Transverse colon (tissue), 4 donors: ENCODE measurements at regions of chr19 and their contacts with region 1.

Region 1: DNA sequence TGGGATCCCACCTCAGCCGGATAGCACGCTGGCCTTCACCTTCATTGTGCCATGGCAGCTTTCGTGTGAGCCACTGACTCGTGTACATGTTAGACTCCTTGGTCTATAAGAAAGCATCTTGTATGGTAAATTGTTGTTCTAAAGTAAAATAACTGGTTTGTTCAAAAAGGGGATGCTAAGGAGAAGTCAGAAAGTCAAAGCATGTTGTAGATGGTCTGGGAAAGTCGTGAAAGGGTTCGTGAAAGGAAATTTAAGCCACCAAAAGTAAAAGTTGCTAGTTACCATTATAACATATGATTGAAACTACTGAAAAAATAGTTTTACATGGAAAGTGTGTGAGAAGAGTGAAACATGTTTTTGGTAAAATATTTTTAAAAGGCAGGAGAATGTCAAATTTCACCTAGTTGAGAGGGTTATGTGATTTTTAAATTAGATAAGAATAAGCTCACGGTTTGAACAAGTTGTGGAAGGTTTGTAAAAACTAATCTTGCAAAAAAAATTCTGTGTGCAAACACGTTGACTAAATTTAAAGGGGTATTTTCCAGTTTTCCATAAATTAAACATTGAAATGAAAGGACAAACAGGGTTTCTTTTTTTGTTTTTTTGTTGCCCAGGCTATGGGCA is 23.4 kb downstream of the DPRX start:
- DNase-seq: no peak
- H3K4me3 ChIP-seq: no peak overlapping the region
- H3K27ac ChIP-seq: no peak overlapping the region
- H3K4me1 ChIP-seq: no peaks in the 10 kb centered on the region
- H3K27me3 ChIP-seq: no peaks in the 10 kb centered on the region
- CTCF ChIP-seq: no peak
- EP300 ChIP-seq: no peak
- POLR2A ChIP-seq: no peak

Region 2: DNA sequence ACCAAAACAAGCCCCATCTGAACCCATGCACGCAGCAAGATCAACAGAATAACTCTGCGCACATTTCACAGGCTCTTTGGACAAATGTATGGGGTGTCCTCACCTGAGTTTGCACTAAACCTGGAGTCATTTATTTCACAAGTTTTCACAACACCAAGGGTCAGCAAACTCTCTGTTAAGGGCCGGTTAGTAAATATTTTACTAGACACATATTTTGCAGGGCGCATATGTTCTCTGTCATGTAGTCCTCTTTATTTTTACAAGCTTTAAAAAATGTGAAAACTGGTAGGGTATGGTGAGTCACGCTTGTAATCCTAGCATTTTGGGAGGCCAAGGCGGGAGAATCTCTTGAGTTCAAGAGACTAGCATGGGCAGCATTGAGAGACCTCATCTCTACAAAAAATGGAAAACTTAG is 68.9 kb before region 1 on chr19:
- in situ Hi-C with region 1: no loop called
- intact Hi-C with region 1: loop called (anchors 2 kb)
- DNase-seq: no peak
- H3K4me3 ChIP-seq: no peak overlapping the region
- H3K27ac ChIP-seq: no peak overlapping the region
- H3K4me1 ChIP-seq: no peaks in the 10 kb centered on the region
- H3K27me3 ChIP-seq: no peaks in the 10 kb centered on the region
- CTCF ChIP-seq: no peak
- EP300 ChIP-seq: no peak
- POLR2A ChIP-seq: no peak